ENCODE measurements at regions of chr6 and their contacts with region 1.

Region 1: DNA sequence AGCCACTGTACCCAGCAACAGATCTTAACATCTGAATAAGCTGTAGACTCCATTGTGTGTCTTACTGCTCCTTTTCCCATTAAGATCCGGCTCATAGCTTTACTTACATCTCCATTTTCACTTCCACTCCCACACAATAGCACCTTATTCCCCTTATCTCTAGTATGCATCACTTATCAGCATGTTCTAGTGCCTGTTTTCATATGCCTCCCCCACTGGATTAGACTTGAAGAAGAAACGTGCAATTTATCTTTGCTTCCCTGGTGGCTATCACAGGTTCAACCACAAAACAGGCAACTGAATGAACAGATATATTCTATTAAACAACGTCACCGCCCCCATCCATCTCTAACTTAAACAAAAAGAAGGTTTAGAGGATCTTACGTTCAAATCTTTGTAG is 12.1 kb downstream of the SSR1 start:
- DNase-seq: peak in 2 of 4 experiments; percentile 20 to 25
- ATAC-seq: no peak
- H3K4me3 ChIP-seq: no peak overlapping the region
- H3K27ac ChIP-seq: no peak overlapping the region
- H3K4me1 ChIP-seq: no peaks in the 10 kb centered on the region
- H3K27me3 ChIP-seq: no peaks in the 10 kb centered on the region
- CTCF ChIP-seq: no peak
- EP300 ChIP-seq: no peak
- POLR2A ChIP-seq: no peak
- RAD21 ChIP-seq: no peak

Region 2: DNA sequence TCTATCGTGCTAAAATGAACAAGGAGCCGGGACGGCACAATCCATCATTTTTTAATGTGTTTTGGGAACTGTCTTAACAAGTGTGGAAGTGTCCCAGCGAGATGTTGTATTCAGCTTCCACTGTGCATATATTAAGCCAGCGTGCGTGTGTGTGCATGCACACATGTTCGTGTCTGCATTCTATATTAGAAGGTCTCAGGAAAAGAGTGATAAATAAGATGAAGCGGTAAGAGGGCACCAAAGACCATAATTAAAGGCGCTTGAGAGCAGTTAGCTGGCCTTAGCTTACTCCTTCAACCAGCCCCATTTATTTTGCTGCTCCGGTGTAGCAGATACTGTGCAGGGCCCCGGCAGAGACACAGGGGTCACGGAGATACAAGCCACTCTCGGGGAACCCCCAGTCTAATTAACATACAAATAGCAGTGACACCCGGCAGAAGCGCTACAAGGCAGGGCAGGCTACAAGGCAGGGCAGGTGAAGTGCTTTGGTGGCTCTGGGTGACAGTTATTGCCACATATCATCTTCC is 399.7 kb before region 1 on chr6:
- CTCF ChIA-PET with region 1: no interaction called
- POLR2A ChIA-PET with region 1: no interaction called
- in situ Hi-C with region 1: no loop called
- intact Hi-C with region 1: no loop called
- DNase-seq: no peak
- ATAC-seq: no peak; the same call in 2 of the 3 replicates
- H3K4me3 ChIP-seq: no peak overlapping the region
- H3K27ac ChIP-seq: no peak overlapping the region
- H3K4me1 ChIP-seq: peaks cover 5 to 12% of the 10 kb centered on the region in 2 experiments; a peak in 4 of 5 replicates
- H3K27me3 ChIP-seq: no peaks in the 10 kb centered on the region
- CTCF ChIP-seq: no peak; a peak in 1 of 6 replicates
- EP300 ChIP-seq: no peak
- POLR2A ChIP-seq: no peak
- RAD21 ChIP-seq: no peak

Region 3: GRCh38 chr6:6952484-6952883 is 348.4 kb before region 1 on chr6:
- CTCF ChIA-PET with region 1: no interaction called
- POLR2A ChIA-PET with region 1: no interaction called
- in situ Hi-C with region 1: no loop called
- intact Hi-C with region 1: no loop called
- DNase-seq: no peak
- ATAC-seq: no peak
- H3K4me3 ChIP-seq: no peak overlapping the region
- H3K27ac ChIP-seq: no peak overlapping the region
- H3K4me1 ChIP-seq: peaks cover 0 to 3% of the 10 kb centered on the region in 2 experiments; a peak in 2 of 5 replicates
- H3K27me3 ChIP-seq: no peaks in the 10 kb centered on the region
- CTCF ChIP-seq: no peak
- EP300 ChIP-seq: no peak
- POLR2A ChIP-seq: no peak
- RAD21 ChIP-seq: no peak

Region 4: DNA sequence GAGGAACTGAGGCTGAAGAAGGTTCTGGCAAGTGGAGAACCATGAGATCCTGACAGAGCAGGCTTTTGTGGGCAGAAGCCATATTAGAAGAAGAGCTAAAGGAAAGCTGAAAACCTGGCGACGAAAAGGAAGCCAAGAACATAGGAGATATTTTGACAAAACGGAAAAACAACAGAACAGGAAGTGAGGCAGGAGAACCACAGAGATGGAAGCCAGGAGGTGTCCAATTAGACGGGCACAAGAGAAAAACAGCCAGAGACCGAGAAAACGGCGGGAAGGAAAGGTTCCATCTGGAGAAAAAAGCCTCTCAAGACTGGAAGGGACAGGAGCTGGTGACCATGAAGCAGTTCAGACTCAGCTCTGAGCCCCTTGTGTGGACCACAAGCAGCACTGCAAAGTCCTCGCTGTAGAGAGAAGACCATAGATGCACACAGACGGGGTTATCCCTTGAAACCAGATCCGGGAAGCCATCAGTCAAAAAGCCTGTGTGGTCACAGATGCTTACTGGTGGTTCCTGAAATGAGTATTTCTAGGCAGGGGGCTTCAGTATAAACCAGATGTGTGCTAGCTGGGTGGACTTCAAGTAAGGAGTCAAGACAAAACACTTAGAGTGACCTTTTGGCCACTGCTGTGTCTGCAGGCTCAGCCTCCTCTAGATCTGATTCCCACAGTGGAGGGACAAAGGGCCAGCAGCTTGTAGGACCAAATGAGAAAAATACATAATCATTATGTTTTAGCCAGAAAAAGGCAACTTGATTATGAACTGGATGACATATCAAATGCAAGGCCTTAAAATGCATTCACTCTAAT is 18.6 kb before region 1 on chr6:
- CTCF ChIA-PET with region 1: no interaction called
- POLR2A ChIA-PET with region 1: interaction called, 16 read pairs
- in situ Hi-C with region 1: no loop called
- intact Hi-C with region 1: no loop called
- DNase-seq: no peak
- ATAC-seq: peak; percentile 30; the same call in 1 of the 3 replicates
- H3K4me3 ChIP-seq: no peak overlapping the region
- H3K27ac ChIP-seq: no peak overlapping the region
- H3K4me1 ChIP-seq: no peaks in the 10 kb centered on the region
- H3K27me3 ChIP-seq: no peaks in the 10 kb centered on the region
- CTCF ChIP-seq: no peak
- EP300 ChIP-seq: no peak
- POLR2A ChIP-seq: peak; percentile 39; the same call in 1 of the 2 replicates
- RAD21 ChIP-seq: no peak

Region 5: DNA sequence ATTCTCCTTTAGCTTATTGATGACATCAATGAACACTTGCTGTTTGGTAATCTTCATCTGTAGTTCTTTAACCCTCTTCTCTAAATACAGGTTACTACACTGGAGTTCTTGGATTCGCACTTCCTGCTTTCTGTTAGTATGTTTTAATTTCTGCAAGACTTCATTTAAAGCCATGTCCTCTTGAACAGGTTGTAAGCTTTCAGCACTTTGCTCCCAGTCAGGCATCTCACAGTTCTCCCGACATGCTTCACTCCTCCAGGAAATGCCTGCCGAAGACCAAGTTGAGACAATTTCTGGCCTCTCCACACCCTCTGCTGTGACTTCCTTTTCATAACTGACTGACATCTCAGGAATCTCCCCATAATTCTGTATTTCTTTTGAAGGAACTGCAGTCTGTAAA is 72.8 kb after region 1 on chr6:
- CTCF ChIA-PET with region 1: no interaction called
- POLR2A ChIA-PET with region 1: no interaction called
- in situ Hi-C with region 1: no loop called
- intact Hi-C with region 1: no loop called
- DNase-seq: no peak
- ATAC-seq: no peak
- H3K4me3 ChIP-seq: no peak overlapping the region
- H3K27ac ChIP-seq: no peak overlapping the region
- H3K4me1 ChIP-seq: no peaks in the 10 kb centered on the region
- H3K27me3 ChIP-seq: peaks cover 17 to 26% of the 10 kb centered on the region in 2 experiments
- CTCF ChIP-seq: no peak
- EP300 ChIP-seq: no peak
- POLR2A ChIP-seq: no peak
- RAD21 ChIP-seq: no peak